Activated CD8-positive, alpha-beta memory T cell treated with anti-CD3 and anti-CD28 coated beads, Interleukin-2, amount 10 ng/mL, durations not matched to agents 7 days and 5 days (primary cell): ENCODE measurements at regions of chr4 and their contacts with region 1.

Region 1: DNA sequence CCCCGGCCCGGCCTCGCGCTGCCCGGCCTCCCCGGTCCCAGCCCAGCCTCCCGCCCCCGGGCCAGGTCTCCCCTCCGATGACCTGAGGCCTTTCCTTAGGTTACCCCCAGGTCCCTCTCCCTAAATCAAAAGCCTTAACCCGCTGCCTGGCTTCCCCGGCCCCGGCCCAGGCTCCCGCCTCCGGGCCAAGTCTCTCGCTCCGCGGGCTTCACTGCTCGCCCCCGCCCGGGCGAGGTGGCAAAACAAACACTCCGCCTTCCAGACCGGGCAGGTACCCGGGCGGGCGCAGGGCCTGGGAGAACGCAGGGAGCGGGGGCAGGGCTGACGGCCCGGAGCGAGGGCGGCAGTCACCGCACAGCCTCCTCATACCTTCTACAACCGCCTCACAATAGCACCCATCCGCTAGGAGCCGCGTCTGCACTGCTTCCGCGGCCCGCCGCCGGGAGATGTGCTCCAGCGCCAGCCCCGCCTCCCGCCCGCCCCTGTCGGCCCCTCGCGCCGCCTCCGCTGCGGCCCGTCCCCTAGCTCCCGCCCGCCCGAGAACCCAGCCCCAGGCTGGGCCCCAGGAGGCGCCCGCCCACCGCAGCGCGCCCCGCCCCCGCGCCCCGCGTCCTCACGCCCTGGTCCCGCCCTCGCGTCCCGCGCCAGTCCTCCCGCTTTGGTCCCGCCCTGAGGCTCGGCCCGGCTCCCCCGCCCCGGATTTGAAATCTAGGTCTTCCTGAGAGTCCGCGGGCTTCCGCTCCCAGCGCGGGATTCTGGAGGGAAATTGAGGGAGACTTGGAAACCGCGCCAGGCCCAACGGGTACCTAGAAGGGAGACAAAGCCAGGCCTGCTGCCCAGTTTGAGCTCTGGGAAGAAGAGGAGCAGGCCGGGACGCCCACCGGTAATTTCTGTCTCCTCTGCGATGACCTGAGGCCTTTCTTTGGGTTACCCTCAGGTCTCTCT is at the starts of genes CASP3 and PRIMPOL:
- DNase-seq: peak; percentile 98
- ATAC-seq: peak; percentile 88
- H3K4me3 Mint-ChIP-seq: peak within 1 kb of the TSS; percentile 94
- H3K27ac Mint-ChIP-seq: peak within 1 kb of the TSS; percentile 89
- H3K4me1 Mint-ChIP-seq: peaks cover 53% of the 10 kb centered on the region
- H3K27me3 Mint-ChIP-seq: no peaks in the 10 kb centered on the region
- total RNA-seq, gene CASP3: 70.7 to 116 TPM
- total RNA-seq, gene PRIMPOL: 21.0 to 25.3 TPM

Region 2: GRCh38 chr4:184395971-184396391 is 253.3 kb before region 1 on chr4:
- CTCF ChIA-PET with region 1: no interaction called
- DNase-seq: no peak
- ATAC-seq: no peak
- H3K4me3 Mint-ChIP-seq: no peak overlapping the region
- H3K27ac Mint-ChIP-seq: no peak overlapping the region
- H3K4me1 Mint-ChIP-seq: peaks cover 42% of the 10 kb centered on the region
- H3K27me3 Mint-ChIP-seq: no peaks in the 10 kb centered on the region

Region 3: DNA sequence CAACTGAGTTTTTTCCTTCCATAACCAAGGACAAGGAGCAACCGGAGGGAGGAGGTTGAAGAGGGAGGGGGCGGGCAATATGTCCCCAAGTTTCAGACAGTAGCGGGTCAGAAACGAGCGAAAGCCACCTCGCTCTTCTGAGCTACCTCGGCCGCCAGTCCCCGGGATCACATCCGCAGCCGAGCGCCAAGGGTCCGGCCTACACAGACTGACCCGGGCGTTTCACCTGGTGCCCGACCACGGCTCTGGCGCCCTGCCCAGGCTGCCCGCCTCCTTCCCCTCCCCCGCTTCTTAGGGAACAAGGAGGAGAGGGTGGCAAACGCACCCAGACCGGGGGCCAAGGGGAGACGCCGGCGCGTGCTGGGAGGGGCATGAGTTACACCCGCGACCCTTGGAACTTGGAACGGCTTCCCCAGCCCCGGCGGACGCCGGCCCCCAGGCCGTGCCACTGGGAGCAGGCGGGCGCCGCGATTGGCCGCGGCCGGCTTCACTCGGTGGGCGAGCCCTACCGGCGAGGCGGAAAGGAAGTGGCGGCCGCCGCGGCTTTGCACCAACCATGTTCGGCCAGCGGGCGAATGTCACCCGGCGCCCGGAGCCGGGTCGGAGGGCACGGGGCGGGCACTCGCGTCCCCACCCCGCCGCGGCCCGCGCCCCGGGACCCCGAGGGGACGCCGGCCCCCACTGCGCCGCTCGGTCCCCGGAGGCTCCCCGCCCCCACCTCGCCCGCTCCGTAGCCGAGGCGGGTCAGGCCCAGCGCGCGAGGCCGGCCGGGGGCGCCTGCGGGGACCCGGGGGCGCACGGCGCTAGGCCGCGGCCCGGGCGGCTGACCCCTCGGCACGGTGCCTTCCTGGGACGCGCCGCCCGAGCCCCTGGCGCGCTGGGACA is 176.4 kb before region 1 on chr4:
- CTCF ChIA-PET with region 1: no interaction called
- DNase-seq: peak; percentile 76
- ATAC-seq: peak; percentile 37
- H3K4me3 Mint-ChIP-seq: peak overlapping the region; percentile 90
- H3K27ac Mint-ChIP-seq: peak overlapping the region; percentile 91
- H3K4me1 Mint-ChIP-seq: peaks cover 54% of the 10 kb centered on the region
- H3K27me3 Mint-ChIP-seq: no peaks in the 10 kb centered on the region

Region 4: GRCh38 chr4:184575306-184575705 is 74.0 kb before region 1 on chr4:
- CTCF ChIA-PET with region 1: no interaction called
- DNase-seq: no peak
- ATAC-seq: no peak
- H3K4me3 Mint-ChIP-seq: no peak overlapping the region
- H3K27ac Mint-ChIP-seq: no peak overlapping the region
- H3K4me1 Mint-ChIP-seq: peaks cover 7% of the 10 kb centered on the region
- H3K27me3 Mint-ChIP-seq: no peaks in the 10 kb centered on the region

Region 5: DNA sequence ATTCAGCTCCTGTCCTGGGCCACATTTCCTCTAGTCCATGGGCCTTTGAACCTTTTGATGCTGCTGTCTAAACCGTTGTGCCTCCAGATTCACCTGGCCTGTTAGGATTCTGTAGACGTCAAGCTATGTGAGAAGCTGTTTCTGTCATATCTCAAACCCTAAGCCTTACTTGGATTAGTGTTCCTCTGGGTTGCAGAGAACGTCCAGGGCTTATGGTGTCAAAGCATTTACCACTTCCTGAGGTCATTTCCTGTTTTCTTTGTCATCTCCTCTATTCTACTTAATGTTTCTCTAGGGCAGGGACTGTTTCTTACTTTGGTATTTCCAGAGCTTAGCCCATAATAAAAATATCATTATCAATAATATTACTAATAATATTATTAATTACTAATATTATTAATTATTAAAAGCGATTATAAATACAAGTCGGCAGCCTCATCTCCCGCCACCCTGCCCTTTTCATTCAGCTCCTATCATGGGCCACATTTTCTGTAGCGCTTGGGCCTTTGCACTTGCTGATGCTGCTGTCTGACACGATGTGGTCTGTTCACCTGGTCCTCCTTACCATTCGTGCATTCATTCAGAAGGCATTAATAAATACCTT is 19.3 kb after region 1 on chr4:
- CTCF ChIA-PET with region 1: interaction called, 13 read pairs
- DNase-seq: peak; percentile 63
- ATAC-seq: peak; percentile 89
- H3K4me3 Mint-ChIP-seq: peak overlapping the region; percentile 3
- H3K27ac Mint-ChIP-seq: peak overlapping the region; percentile 93
- H3K4me1 Mint-ChIP-seq: peaks cover 36% of the 10 kb centered on the region
- H3K27me3 Mint-ChIP-seq: no peaks in the 10 kb centered on the region

Region 6: DNA sequence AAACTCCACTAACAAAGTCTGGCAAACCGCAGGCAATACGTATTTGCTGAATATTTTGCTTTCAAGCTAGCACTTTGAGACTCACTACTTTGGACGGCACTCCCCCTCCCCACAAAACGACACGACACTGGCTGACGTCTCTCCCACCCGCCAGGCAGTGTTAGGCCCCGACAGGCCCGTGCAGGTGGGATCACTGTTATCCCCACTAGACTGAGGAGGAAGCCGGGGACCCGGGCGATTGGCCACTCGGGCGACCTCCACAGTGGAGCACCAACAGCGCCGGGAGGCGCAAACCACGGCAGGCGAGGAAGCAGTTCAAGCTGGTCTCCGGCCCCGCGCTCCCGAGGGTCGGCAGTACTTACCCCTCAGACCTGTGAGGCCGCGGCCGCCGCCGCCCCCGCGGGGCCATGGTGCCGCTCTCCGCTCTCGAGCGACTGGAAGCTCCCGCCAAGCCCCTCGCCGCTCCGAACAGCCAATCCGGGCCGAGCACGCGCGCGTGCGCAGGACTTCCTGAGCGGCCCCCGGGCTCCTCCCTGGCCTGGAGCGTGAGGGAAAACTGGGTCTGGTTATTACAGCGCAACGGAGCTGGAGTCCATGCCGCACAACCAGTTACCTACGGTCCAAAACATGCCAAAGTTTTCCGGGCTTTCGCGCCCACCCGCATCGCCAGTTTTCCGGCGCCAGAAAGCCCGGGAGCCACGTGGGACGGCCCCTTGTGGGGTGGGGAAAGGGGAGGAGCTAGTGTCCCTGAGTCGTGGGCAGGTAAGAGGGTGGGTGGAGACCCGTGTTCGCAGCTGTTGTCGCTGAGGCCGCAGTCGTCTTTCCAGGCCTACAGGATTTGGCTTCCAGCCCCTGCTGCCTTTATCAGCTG is 84.6 kb after region 1 on chr4 and contains the start of gene CENPU:
- CTCF ChIA-PET with region 1: interaction called, 12 read pairs
- DNase-seq: peak; percentile 97
- ATAC-seq: peak; percentile 94
- H3K4me3 Mint-ChIP-seq: peak within 1 kb of the TSS; percentile 95
- H3K27ac Mint-ChIP-seq: peak within 1 kb of the TSS; percentile 92
- H3K4me1 Mint-ChIP-seq: peaks cover 43% of the 10 kb centered on the region
- H3K27me3 Mint-ChIP-seq: no peaks in the 10 kb centered on the region
- total RNA-seq, gene CENPU: 71.9 to 74.7 TPM